GM12878 (cell line): ENCODE measurements at regions of chr15 and their contacts with region 1.

Region 1: GRCh38 chr15:40182358-40183029 is 21.6 kb downstream of the BUB1B start:
- DNase-seq: no peak
- ATAC-seq: peak; percentile 73
- H3K4me3 ChIP-seq: no peak overlapping the region; the same call in 1 of the 2 replicates
- H3K27ac ChIP-seq: peak overlapping the region; percentile 39
- H3K4me1 ChIP-seq: peaks cover 19% of the 10 kb centered on the region
- H3K27me3 ChIP-seq: no peaks in the 10 kb centered on the region
- CTCF ChIP-seq: no peak
- EP300 ChIP-seq: no peak
- POLR2A ChIP-seq: no peak
- RAD21 ChIP-seq: no peak

Region 2: GRCh38 chr15:40197434-40197833 is 14.9 kb after region 1 on chr15:
- CTCF ChIA-PET with region 1: interaction called, 6 read pairs
- POLR2A ChIA-PET with region 1: interaction called, 8 read pairs
- RAD21 ChIA-PET with region 1: interaction called, 4 read pairs
- SMC1A ChIA-PET with region 1: interaction called, 52 read pairs
- in situ Hi-C with region 1: no loop called
- intact Hi-C with region 1: no loop called
- DNase-seq: no peak
- ATAC-seq: no peak
- H3K4me3 ChIP-seq: no peak overlapping the region
- H3K27ac ChIP-seq: no peak overlapping the region
- H3K4me1 ChIP-seq: no peaks in the 10 kb centered on the region
- H3K27me3 ChIP-seq: no peaks in the 10 kb centered on the region
- CTCF ChIP-seq: no peak
- EP300 ChIP-seq: no peak
- POLR2A ChIP-seq: no peak
- RAD21 ChIP-seq: no peak